ENCODE measurements at regions of chr4 and their contacts with region 1.

Region 1: DNA sequence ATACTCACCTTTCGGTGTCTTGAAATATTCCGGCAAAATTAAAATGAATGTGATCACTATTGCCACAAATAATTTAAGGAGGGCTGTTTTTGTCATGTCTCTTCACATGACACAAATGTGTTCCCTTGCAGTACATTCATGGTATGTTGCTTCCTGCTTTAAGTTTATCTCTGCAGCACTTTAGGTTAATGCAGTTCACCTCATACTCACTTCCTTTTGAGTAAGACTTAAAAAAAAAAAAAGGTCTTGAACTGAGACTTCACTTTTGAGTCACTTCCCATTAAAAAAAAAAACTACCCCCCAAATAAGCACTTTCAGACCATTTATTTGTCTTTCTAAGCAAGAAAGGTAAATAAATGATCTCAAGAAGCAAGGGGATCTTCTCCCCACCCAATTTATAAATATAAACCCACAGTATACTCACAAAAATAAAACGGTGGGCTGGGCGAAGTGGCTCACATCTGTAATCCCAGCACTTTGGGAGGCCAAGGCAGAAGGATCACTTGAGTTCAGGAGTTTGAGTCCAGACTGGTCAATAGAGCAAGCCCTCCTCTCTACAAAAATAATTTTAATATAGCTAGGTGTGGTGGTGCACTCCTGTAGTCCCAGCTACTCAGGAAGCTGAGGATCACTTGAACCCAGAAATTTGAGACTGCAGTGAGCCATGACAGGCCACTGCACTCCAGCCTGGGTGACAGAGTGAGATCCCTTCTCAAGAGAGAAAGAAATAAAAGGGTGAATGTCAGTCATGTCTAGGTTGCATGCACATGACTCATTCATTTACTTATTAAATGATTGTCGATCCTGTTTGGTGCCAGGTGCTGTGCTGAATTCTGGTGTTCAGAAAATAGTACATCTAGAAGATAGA is at the start of gene TMEM156:
- DNase-seq: no peak
- ATAC-seq: peak; percentile 90
- H3K4me3 Mint-ChIP-seq: peak within 1 kb of the TSS; percentile 83
- H3K27ac Mint-ChIP-seq: peak within 1 kb of the TSS; percentile 89
- H3K4me1 Mint-ChIP-seq: peaks cover 29% of the 10 kb centered on the region
- H3K27me3 Mint-ChIP-seq: no peaks in the 10 kb centered on the region
- total RNA-seq, gene TMEM156: 14.0 to 14.9 TPM

Region 2: DNA sequence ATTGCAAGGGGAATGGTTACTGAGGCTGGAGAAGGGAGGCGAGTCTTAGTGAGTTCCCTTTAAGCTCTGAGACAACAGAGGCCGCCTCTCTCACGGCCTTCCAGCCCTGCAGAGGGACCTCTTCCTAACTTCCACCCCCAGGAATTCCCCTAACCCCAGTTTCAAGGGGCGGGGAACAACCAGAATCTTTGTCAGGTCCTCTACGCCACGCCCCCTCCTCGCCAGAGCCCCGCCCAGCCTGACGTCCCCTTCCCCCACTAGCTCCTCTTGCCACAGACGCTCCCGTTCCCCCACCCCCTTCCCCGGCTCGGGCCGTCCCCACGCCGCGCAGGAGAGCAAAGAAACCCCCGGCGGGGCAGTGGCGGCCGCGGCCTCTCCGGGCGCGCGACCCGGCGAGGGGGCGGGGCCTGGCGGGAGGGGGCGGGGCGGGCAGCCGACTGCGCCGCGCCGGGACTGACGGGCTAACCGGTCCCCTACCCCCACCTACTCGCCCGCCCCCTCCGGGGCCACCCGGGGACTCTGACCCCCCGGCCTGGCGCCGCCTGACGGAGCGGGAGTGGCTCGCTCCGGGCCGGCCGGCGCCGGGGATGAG is 12.0 kb after region 1 on chr4:
- POLR2A ChIA-PET with region 1: interaction called, 33 read pairs
- DNase-seq: peak; percentile 84
- ATAC-seq: peak; percentile 81
- H3K4me3 Mint-ChIP-seq: peak overlapping the region; percentile 88
- H3K27ac Mint-ChIP-seq: peak overlapping the region; percentile 91
- H3K4me1 Mint-ChIP-seq: peaks cover 43% of the 10 kb centered on the region
- H3K27me3 Mint-ChIP-seq: no peaks in the 10 kb centered on the region

Region 3: GRCh38 chr4:39067451-39067850 is 35.0 kb after region 1 on chr4:
- POLR2A ChIA-PET with region 1: no interaction called
- DNase-seq: no peak
- ATAC-seq: no peak
- H3K4me3 Mint-ChIP-seq: no peak overlapping the region
- H3K27ac Mint-ChIP-seq: no peak overlapping the region
- H3K4me1 Mint-ChIP-seq: peaks cover 3% of the 10 kb centered on the region
- H3K27me3 Mint-ChIP-seq: no peaks in the 10 kb centered on the region

Region 4: GRCh38 chr4:39353478-39354253 is 321.2 kb after region 1 on chr4:
- POLR2A ChIA-PET with region 1: no interaction called
- DNase-seq: no peak
- ATAC-seq: peak; percentile 84
- H3K4me3 Mint-ChIP-seq: peak overlapping the region; percentile 93
- H3K27ac Mint-ChIP-seq: peak overlapping the region; percentile 99
- H3K4me1 Mint-ChIP-seq: peaks cover 49% of the 10 kb centered on the region
- H3K27me3 Mint-ChIP-seq: no peaks in the 10 kb centered on the region